Uterus (tissue), 4 donors: ENCODE measurements at regions of chr7 and their contacts with region 1.

Region 1: DNA sequence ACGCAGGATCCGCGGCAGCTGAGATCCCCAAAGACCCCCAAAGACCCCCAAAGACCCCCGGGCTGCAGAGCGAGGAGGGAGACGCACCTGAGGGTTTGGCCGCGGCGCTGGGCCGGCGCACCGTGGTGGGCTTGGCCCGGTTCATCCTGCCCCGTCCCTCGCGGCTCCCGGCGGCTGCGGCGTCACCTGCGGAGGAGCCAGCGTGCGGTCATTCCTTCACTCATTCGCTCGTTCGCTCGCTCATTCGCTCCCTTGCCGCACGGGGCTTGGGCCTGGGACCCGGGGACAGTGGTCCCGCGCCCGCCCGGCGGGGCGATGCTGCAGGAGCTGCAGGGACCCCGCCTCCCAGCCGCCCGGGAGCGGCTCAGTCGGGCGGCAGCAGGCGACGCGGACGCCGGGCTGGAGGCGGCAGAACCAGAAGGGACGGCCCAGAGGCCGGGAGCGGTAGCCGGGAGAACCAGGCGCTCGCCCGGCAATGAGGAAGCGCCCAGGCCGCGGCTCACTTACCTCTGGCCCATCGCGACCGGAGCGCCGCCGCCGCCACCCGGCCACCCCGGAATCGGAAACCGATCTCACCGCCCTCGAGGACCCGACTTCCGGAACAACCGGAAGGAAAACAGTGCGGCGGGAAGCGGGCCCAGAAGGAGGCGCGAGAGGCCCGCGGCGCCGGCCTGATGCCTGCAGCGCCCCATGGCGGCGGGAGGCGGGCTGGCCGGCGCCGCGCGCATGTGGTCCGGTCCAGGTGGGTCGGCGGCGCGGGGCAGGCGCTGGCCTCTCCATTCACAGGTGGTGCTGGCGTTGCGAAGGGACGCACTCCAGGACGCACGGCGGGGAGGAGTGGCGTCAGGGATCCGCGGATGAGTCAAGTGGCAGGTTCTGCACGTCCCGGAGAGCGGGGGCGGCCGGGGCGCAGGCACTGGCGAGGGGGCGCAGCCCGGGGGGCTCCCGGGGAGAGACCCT is at the start of gene INTS1:
- DNase-seq: peak; percentile 88 to 90
- H3K4me3 ChIP-seq: peak within 1 kb of the TSS; percentile 77 to 97
- H3K27ac ChIP-seq: peak within 1 kb of the TSS; percentile 56 to 61
- H3K4me1 ChIP-seq: peaks cover 0 to 9% of the 10 kb centered on the region in 2 donors
- H3K27me3 ChIP-seq: no peaks in the 10 kb centered on the region
- CTCF ChIP-seq: peak; percentile 84 to 99 (median 98)
- POLR2A ChIP-seq: peak; percentile 40 to 51
- total RNA-seq, gene INTS1: 8.2 to 68.9 (median 30.3) TPM

Region 2: DNA sequence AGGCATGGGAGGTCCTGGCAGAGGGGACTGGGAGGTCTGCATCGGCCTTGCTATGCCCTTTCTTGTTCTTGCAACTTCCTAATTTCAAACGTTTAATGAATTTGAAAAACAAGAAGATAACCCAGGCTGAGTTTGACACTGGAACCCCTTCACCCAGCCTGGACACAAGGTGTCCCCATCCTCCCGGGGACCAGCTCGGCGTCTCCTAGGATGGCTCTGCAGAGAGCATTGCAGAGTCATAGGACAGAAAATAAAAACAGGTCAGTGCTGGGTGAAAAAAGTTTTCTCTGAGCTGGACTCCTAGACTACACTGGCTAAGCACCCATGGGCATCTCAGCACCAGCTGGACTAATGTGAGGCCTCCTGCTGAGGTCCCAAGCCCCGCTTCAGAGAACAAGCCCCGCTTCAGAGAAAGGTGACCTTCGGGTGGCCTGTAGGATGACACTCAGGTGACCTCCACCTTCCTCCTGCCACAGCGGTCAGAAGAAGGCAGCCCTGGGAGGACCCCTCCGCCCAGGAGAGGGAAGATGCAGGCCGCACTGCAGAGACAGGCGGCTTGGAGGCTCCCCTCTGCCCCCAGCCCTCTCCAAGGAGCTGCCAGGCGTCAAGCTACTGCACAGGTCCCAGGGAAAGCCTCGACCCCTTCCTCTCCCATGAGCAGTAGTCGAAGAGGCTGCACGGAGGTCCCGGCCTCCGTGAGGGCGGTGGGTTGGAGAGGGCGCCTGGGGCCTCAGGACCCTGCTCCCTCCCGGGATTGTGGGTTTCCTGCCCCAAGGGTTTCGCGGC is 280.7 kb before region 1 on chr7:
- intact Hi-C with region 1: no loop called
- DNase-seq: no peak
- H3K4me3 ChIP-seq: no peak overlapping the region
- H3K27ac ChIP-seq: no peak overlapping the region
- H3K4me1 ChIP-seq: peaks cover 0 to 6% of the 10 kb centered on the region in 2 donors
- H3K27me3 ChIP-seq: peaks cover 29 to 51% of the 10 kb centered on the region in 2 donors
- CTCF ChIP-seq: no peak
- POLR2A ChIP-seq: no peak

Region 3: DNA sequence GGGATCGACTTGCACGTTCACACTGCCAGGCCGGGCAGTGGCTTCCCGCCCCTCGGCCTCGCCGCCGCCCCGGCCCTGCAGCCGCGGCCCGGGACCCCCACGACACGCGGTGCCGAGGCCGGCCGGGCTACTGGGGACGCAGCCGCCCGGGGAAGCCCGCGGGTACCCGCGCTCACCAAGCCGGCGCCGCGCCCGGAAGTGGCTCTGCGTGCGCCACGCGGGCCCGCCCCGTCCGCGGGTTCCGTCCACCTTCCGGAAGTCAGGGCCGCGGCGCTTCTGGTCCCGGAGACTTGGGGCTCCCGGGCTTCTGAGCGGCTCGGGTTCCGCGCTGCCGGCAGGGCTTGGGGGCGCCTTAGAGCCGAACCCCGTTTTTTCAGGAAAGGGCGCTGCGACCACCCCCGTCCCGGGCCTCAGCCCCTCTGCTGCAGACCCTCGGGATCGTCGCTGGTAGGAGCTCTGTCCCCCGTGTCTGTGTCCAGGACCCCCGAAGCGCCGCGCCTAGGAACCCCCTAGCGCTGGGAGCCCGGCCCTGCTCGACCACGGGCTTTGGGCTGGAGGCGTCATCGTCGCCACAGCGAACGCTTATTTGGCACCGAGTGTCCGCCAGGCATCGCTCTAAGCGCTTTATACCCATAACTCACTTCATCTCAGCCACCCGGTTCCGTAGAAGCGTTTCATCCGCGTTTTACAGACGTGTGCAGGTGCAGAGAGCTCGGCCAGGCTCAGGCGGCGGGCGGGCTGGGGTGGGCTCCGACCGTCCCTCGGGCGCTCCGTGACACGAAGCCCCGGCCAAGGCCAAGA is 65.9 kb after region 1 on chr7 and contains the start of gene PSMG3:
- intact Hi-C with region 1: loop called (anchors 10 kb)
- DNase-seq: peak; percentile 88
- H3K4me3 ChIP-seq: peak within 1 kb of the TSS; percentile 89 to 95
- H3K27ac ChIP-seq: peak within 1 kb of the TSS; percentile 94 to 95
- H3K4me1 ChIP-seq: peaks cover 0 to 6% of the 10 kb centered on the region in 2 donors
- H3K27me3 ChIP-seq: no peaks in the 10 kb centered on the region
- CTCF ChIP-seq: peak; percentile 6 to 54 (median 40)
- POLR2A ChIP-seq: peak; percentile 69 to 82
- total RNA-seq, gene PSMG3: 16.4 to 143 (median 25.7) TPM